PC-3 (cell line): ENCODE measurements at regions of chr1 and their contacts with region 1.

Region 1: DNA sequence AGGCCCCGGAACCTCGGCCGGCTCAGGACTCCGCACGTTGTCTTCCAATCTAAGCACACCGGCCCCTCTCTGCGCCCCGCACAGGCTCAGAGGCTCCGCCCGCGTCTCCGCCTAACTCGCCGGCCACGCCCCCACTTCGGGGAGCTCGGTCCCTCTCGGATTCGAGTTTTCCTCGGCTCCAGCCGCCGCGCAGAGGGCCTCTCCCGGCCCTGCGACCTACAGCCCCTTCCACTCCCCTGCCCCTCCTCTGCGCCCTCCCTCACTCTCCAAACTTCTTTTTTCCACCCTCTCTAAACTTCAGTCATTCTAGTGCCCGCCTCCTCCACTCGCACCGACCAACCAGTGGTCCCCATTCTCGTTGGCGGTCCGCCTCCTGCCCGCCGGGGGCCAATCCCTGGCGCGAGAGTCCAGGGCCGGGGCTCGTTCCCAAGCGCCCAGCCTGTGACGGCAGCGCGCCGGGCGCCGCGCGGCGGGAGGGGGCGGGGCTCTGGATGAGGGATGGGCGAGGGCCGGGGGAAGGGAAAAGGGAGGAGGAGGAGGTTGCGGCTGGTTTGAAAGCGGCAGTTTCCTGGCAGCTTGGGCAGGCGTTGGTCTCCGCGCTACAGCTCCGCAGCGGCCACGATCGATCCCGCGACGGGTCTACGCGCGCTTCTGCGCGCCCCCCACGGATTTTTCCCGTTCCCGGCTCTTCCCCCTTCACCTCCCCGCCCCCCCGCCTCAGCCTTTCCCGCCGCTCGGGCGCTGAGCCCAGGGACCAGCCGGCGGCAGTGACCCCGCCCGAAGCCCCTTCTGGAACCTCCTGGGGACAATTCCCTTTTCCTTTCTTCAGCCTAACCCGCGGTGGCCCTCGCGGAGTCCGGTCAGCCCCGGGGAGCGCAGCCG is at the start of gene MAGI3:
- DNase-seq: peak; percentile 98
- ATAC-seq: peak; percentile 81
- H3K4me3 ChIP-seq: peak within 1 kb of the TSS; percentile 75
- H3K27ac ChIP-seq: peak within 1 kb of the TSS; percentile 42
- H3K4me1 ChIP-seq: peaks cover 37% of the 10 kb centered on the region
- H3K27me3 ChIP-seq: no peaks in the 10 kb centered on the region
- CTCF ChIP-seq: no peak
- total RNA-seq, gene MAGI3: 7.2 and 10.7 TPM in 2 replicates

Region 2: GRCh38 chr1:113140588-113141446 is 249.4 kb before region 1 on chr1:
- CTCF ChIA-PET with region 1: interaction called, 4 read pairs
- POLR2A ChIA-PET with region 1: no interaction called
- intact Hi-C with region 1: loop called (anchors 2 kb)
- DNase-seq: peak; percentile 79
- ATAC-seq: peak; percentile 80
- H3K4me3 ChIP-seq: no peak overlapping the region
- H3K27ac ChIP-seq: peak overlapping the region; percentile 10
- H3K4me1 ChIP-seq: peaks cover 21% of the 10 kb centered on the region
- H3K27me3 ChIP-seq: no peaks in the 10 kb centered on the region
- CTCF ChIP-seq: peak; percentile 96

Region 3: DNA sequence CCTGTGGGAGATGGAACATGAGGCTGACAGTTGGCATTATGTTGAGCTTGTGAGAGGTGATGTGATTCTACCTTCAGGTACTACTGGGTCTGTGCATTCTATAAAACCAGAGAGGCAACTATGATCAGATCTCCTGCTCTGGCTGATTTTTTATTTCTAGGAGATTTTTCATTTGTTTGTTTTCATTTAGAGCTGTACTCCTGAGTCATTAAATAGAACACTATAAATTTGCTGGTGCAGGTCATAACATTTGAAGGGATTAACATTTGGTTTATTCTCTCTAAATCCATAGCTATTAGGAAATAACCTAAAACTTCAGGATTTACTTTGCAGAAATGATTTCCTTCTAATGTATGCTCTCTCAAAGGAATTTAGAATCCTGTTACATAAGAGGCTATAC is 43.0 kb after region 1 on chr1:
- CTCF ChIA-PET with region 1: no interaction called
- POLR2A ChIA-PET with region 1: no interaction called
- intact Hi-C with region 1: loop called (anchors 2 kb)
- DNase-seq: peak; percentile 20
- ATAC-seq: peak; percentile 83
- H3K4me3 ChIP-seq: no peak overlapping the region
- H3K27ac ChIP-seq: no peak overlapping the region
- H3K4me1 ChIP-seq: peaks cover 27% of the 10 kb centered on the region
- H3K27me3 ChIP-seq: no peaks in the 10 kb centered on the region
- CTCF ChIP-seq: no peak

Region 4: DNA sequence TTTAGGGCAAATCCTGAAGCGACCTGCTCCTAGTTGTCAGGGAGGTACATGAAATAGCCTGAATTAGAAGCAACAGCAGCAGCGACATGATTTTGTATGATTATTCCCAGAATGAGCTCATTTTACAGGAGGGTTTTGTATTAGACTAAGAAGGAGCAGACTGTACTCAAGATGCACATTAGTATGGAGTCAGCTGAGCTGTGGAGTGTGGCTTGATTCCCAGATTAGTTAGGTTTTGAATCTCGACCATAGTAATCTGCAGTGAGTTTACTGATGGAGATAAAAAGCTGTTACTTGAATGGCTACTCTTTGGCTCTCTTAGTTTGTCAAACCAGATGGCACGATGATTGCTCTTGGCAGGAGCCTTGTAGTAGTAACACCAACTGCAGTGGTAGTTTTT is 226.0 kb after region 1 on chr1:
- CTCF ChIA-PET with region 1: no interaction called
- POLR2A ChIA-PET with region 1: no interaction called
- intact Hi-C with region 1: loop called (anchors 10 kb)
- DNase-seq: no peak
- ATAC-seq: no peak
- H3K4me3 ChIP-seq: no peak overlapping the region
- H3K27ac ChIP-seq: no peak overlapping the region
- H3K4me1 ChIP-seq: peaks cover 5% of the 10 kb centered on the region
- H3K27me3 ChIP-seq: no peaks in the 10 kb centered on the region
- CTCF ChIP-seq: no peak

Region 5: DNA sequence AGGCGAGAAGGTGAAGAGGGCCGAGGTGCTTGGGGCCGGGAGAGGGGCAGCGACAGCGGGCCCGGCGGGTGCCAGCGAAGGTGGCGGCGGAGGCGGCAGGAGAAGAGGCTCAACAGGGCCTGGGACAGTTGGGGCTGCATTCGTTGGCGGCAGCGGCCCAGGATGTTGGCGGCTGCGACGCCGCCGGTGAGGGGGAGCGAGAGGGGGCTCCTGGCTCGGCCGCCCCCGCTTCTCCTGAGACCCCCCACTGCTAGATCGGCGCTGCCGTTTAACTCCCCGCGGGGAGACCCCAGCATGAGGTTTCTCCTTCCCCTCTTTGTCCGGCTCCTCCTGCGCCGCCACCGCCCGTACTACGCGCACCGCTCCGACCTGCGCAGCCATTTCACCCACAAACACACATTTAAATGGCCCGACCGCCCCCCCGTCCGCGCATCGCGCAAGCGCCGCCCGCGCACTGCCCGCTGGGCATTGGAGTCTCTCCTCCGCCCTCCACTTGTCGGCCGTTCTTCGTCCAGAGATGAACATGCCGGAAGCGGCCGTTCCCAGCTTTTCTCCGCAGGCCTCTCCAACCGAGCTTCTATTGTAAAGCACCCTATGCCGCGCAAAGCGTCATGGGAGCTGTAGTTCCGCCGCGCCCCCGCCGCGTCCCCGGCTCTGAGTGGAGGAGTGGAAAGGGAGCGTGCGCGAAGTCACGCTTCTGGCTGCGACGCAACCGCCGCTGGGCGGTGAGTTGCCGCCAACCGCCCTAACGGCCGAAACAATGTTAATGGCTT is 421.9 kb after region 1 on chr1 and contains the start of gene RSBN1:
- CTCF ChIA-PET with region 1: no interaction called
- POLR2A ChIA-PET with region 1: no interaction called
- intact Hi-C with region 1: loop called (anchors 5 kb)
- DNase-seq: peak; percentile 99
- ATAC-seq: peak; percentile 93
- H3K4me3 ChIP-seq: peak within 1 kb of the TSS; percentile 92
- H3K27ac ChIP-seq: peak within 1 kb of the TSS; percentile 59
- H3K4me1 ChIP-seq: peaks cover 29% of the 10 kb centered on the region
- H3K27me3 ChIP-seq: no peaks in the 10 kb centered on the region
- CTCF ChIP-seq: no peak
- total RNA-seq, gene RSBN1: 8.4 and 11.7 TPM in 2 replicates